ENCODE measurements at regions of chr9 and their contacts with region 1.

Region 1: DNA sequence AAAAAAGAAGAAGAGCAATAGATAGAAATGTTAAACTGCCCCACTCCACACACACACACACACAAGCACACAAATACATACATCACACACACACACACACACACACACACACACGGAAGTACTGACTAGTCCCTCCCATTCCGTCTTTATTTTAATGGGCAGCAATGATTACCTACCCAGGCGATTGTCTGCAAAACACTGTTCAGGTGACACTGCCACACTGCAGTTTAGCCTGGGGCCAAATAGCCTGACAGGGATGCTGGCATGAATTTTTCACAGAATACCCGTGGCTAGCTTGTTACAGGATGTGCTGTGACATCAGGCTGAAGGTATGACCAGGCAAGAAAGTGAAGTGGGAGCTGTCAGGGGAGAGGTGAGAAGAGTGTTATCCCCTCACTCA is 86.9 kb downstream of the FRMD3 start:
- DNase-seq: no peak
- H3K4me3 ChIP-seq: no peak overlapping the region
- H3K27me3 ChIP-seq: no peaks in the 10 kb centered on the region
- CTCF ChIP-seq: no peak

Region 2: DNA sequence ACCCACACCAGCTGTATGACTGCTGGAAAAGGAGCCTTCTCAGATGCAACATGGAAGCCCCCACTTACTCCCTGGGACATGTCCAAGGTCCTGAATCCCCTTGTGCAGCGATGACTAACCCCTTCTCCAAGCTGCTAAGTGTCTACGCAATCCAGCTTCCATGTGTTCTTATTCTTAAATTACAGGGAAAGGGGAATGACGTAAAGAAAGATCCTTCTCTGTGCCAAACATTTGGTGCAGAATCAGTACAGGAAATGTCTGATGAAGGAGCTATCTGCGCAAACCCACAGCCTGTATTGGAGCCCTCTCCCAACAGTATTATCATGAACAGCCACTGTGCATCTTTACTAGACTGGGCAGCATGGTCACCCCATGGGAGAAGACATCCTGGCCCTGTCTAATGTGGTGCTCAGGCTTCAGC is 96.3 kb before region 1 on chr9:
- CTCF ChIA-PET with region 1: no interaction called
- POLR2A ChIA-PET with region 1: no interaction called
- DNase-seq: no peak
- H3K4me3 ChIP-seq: no peak overlapping the region
- H3K27me3 ChIP-seq: no peaks in the 10 kb centered on the region
- CTCF ChIP-seq: no peak

Region 3: DNA sequence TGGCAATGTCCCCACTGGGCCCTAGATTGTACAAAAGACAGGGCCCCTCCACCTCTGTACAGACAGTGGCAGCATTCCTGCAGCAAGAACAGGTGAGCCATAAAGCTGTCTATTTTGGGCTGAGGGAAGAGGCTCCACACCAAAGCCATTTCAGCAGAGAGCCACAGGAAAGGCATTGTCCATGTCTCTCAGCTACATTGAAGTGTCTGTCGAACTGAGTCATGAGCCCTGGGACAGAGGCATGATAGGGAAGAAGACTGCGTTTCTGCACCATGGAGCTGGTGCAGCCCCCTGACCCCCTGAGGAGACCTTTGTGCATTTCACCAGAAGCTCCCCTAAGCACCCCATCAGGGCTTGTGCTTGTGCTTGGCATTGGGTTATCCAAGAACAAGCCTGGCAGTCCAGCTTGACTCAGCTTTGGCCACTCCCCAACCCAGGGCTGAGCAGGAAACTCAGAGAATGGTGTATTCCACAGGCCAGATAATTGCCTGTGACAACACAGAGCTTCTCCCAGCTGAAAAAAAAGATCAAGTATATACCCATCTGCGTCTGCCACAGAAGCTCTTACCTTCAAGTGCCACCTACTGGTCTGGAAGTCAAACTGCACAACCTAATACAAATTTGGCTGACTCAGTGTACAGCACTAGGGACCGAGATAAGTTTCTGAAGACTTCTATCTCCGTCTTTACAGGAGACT is 92.8 kb after region 1 on chr9:
- CTCF ChIA-PET with region 1: no interaction called
- POLR2A ChIA-PET with region 1: interaction called, 11 read pairs
- DNase-seq: peak; percentile 41
- H3K4me3 ChIP-seq: no peak overlapping the region
- H3K27me3 ChIP-seq: peaks cover 2% of the 10 kb centered on the region
- CTCF ChIP-seq: peak; percentile 77

Measured in BJ (cell line).